Activated CD4-positive, alpha-beta memory T cell treated with anti-CD3 and anti-CD28 coated beads, Interleukin-2, amount 10 ng/mL, durations not matched to agents 7 days and 5 days (primary cell): ENCODE measurements at regions of chr20 and their contacts with region 1.

Region 1: DNA sequence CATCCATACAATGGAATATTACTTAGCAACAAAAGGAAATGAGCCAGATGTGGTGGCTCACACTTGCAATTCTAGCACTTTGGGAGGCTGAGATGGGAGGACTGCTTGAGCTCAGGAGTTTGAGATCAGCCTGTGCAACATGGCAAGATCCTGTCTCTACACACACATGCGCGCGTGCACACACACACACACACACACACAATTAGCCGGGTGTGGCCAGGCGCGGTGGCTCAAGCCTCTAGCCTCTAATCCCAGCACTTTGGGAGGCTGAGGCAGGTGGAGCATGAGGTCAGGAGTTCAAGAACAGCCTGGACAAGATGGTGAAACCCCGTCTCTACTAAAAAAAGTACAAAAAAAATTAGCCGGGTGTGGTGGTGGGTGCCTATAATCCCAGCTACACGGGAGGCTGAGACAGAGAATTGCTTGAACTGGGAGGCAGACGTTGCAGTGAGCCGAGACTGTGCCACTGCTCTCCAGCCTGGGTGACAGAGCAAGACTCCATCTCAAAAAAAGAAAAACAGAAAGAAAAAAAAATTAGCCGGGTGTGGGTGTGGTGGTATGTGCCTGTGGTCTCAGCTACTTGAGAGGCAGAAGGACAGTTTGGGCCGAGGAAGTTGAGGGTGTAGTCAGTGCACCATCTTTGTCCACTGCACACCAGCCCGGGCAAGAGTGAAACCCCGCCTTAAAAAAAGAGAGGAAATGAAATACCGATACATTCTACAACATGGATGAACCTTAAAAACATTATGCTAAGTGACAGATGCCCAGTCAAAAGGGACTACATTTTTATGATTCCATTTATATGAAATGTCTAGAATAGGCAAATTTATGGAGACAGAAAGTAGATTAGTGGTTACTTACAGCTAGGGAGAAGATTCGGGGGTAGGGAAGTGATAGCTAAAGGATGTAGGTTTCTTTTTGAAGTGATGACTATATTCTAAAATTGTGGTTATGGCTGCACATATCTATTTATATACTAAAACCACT is 52.5 kb downstream of the RBL1 start:
- DNase-seq: peak; percentile 69
- H3K4me3 Mint-ChIP-seq: peak overlapping the region; percentile 80
- H3K27ac Mint-ChIP-seq: peak overlapping the region; percentile 100
- H3K4me1 Mint-ChIP-seq: peaks cover 41% of the 10 kb centered on the region
- H3K27me3 Mint-ChIP-seq: no peaks in the 10 kb centered on the region

Region 2: DNA sequence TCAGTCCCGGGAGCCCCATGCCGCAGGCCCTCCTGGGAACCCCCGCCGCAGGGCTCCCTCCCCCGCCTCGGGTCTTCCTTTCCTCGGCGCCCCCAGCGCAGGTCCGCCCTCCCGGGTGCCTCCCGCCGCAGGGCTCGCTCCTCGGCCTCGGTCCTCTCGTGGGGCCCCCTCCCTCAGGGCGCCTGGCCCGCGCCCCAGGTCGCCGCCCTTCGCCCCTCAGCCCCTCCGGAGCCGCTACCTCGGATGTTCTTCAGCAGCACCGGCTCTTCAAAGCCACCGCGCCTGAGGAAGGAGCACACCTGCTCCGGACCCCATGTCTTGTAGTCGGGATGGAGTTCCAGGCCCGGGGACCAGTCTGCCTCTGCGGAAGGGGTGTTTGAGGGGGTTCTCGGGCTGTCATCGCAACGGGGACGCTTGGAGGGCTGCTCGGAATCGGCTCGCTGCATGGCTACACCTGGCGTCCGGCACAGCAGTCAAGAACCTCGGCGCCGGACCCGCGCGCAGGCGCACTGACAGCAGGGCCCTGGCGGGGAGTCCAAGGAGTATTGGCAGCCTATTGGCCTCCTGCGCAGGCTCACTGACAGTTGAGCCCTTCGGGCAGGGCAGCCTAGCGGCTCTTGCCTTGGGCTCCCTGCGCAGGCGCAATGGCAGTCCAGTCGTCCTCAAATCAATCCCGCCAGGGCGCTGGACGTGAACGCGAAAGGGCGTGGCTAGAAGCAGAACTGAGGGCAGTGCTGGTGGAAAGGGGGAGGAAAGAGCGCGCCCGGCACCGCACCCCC is 91.9 kb before region 1 on chr20 and contains the start of gene SAMHD1:
- CTCF ChIA-PET with region 1: interaction called, 4 read pairs
- POLR2A ChIA-PET with region 1: interaction called, 13 read pairs
- DNase-seq: peak; percentile 93
- H3K4me3 Mint-ChIP-seq: peak within 1 kb of the TSS; percentile 92
- H3K27ac Mint-ChIP-seq: peak within 1 kb of the TSS; percentile 97
- H3K4me1 Mint-ChIP-seq: peaks cover 39% of the 10 kb centered on the region
- H3K27me3 Mint-ChIP-seq: no peaks in the 10 kb centered on the region
- total RNA-seq, gene SAMHD1: 272 TPM

Region 3: DNA sequence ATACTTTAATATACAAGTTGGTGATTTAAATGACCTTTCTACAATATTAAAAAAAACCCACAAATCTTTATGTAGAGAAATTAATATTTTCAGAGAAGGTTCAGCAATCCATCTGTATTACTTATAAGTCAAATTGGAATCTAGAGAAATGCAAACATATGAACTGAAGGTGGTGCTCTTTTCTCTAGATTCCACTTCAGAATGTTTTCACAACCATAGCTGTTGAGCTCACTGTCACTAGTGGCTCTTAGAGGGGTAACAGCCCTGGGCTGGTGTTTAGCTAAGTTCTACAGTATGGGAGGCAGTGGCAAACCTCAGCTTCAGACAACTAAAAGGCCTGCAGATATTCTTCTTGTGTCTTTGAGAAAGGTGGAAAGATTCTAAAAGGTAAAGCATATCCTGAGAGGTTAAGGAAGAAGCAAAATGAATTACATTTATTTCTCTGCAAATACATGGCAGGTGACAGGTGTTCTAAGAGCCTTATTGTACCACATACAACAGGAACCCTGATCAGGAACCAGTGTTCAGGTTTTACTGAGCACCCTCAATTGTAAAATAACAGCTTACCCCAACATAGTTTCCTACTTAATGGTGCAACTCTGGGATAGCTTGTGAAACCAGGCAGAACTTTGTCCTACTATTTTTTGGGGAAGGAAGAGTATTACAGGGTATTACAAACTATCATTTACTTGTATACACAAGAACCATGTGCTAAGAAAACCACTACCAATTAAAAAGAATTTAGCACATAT is 35.2 kb before region 1 on chr20:
- CTCF ChIA-PET with region 1: interaction called, 5 read pairs
- POLR2A ChIA-PET with region 1: interaction called, 13 read pairs
- DNase-seq: peak; percentile 24
- H3K4me3 Mint-ChIP-seq: no peak overlapping the region
- H3K27ac Mint-ChIP-seq: peak overlapping the region; percentile 75
- H3K4me1 Mint-ChIP-seq: peaks cover 19% of the 10 kb centered on the region
- H3K27me3 Mint-ChIP-seq: no peaks in the 10 kb centered on the region

Region 4: DNA sequence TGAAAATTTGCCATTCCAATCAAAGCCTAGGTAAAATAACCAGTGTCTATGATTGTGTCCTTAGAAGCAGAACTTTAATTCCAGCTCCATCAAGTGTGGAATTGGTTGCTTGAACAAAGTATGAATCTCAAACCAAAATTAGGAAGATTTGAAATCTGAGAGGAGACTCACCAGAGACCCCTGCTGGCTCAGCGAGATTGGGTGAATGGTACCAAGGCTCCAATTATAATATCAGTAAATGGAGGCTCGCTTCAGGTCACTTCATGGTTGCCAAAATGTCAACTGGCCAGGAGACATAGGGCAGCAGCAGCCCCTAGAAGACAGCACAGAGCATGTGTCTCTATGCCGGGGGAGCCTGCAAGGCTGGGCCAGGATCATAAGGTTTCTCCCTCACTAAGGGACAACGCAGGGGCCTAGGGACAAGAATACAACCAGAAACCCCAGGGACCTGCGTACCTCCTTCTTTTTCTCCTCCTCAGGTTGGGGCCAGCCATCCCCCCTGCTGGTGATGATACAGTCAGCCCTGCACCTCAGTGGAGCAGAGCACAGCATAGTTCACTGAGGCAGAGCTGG is 38.5 kb after region 1 on chr20:
- CTCF ChIA-PET with region 1: interaction called, 7 read pairs
- POLR2A ChIA-PET with region 1: interaction called, 10 read pairs
- DNase-seq: peak; percentile 25
- H3K4me3 Mint-ChIP-seq: no peak overlapping the region
- H3K27ac Mint-ChIP-seq: no peak overlapping the region
- H3K4me1 Mint-ChIP-seq: peaks cover 27% of the 10 kb centered on the region
- H3K27me3 Mint-ChIP-seq: no peaks in the 10 kb centered on the region

Region 5: DNA sequence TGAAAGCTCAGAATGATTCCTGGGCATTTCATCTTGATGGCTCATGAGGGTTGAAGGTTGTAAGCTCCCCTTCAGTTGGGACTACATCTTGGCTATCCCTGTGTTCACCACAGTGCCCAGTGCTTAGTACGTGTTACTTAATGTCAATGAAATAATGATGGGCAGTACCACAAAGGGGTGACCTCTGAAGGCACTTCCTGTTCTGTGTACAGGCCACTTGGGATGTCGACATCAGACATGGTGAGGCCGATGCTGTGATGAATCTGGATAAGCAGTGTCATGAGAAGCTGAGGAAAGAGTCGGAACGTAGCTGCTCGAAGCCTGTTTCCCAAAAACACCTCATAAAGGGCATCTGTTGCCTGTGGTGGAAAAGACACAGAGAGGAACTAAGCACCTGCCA is 80.2 kb after region 1 on chr20:
- CTCF ChIA-PET with region 1: no interaction called
- POLR2A ChIA-PET with region 1: no interaction called
- DNase-seq: no peak
- H3K4me3 Mint-ChIP-seq: no peak overlapping the region
- H3K27ac Mint-ChIP-seq: no peak overlapping the region
- H3K4me1 Mint-ChIP-seq: no peaks in the 10 kb centered on the region
- H3K27me3 Mint-ChIP-seq: peaks cover 2% of the 10 kb centered on the region

Region 6: GRCh38 chr20:37178839-37179670 is 135.8 kb after region 1 on chr20 and contains the starts of genes MROH8 and RPN2:
- CTCF ChIA-PET with region 1: no interaction called
- POLR2A ChIA-PET with region 1: interaction called, 11 read pairs
- DNase-seq: peak; percentile 97
- H3K4me3 Mint-ChIP-seq: peak within 1 kb of the TSS; percentile 92
- H3K27ac Mint-ChIP-seq: peak within 1 kb of the TSS; percentile 94
- H3K4me1 Mint-ChIP-seq: peaks cover 37% of the 10 kb centered on the region
- H3K27me3 Mint-ChIP-seq: no peaks in the 10 kb centered on the region
- total RNA-seq, gene MROH8: 1.7 to 2.2 TPM
- total RNA-seq, gene RPN2: 168 to 179 TPM